Activated naive CD4-positive, alpha-beta T cell treated with anti-CD3 and anti-CD28 coated beads for 36 hours (primary cell): ENCODE measurements at regions of chr2 and their contacts with region 1.

Region 1: DNA sequence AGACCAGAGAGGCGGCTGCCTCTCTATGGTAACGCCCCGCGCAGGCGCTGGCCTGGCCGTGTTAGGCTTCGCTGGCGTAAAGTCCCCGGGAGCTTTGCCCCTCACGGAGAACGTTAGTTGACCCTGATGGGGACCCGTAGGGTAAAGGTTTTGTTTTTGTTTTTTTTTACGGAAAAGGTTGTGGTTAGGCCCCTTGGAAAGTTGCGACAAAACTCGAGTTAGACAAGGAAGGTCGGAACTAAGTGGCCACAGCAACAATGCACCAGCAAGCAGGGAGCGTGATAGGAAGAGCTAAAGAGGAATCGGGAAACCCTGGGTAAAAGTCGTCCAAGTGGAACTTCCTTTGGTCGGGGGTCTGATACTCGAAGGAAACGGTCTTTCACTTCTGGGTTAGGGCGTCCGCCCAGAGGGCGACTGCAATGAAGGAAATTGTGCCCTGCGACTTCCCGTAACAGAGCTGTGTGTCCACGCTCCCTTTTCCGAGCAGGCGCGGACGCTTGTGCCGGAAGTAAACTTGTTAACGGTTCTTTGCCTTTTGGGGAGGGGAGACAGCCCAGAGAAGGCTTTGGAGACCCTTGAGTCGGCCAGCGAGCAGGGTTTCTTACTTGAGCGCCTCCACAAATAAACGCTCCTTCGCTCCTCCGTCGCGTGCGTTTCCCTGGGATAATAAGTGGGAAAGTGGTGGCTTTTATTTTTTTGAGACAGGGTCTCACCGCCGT is 493 bp upstream of the CLASP1 start:
- DNase-seq: peak; percentile 97
- H3K4me3 Mint-ChIP-seq: peak overlapping the region; percentile 98
- H3K27ac Mint-ChIP-seq: peak overlapping the region; percentile 99
- H3K4me1 Mint-ChIP-seq: peaks cover 63% of the 10 kb centered on the region
- H3K27me3 Mint-ChIP-seq: no peaks in the 10 kb centered on the region

Region 2: GRCh38 chr2:121400201-121400600 is 249.6 kb before region 1 on chr2:
- CTCF ChIA-PET with region 1: no interaction called
- intact Hi-C with region 1: loop called (anchors 1 kb)
- DNase-seq: no peak
- H3K4me3 Mint-ChIP-seq: no peak overlapping the region
- H3K27ac Mint-ChIP-seq: no peak overlapping the region
- H3K4me1 Mint-ChIP-seq: no peaks in the 10 kb centered on the region
- H3K27me3 Mint-ChIP-seq: no peaks in the 10 kb centered on the region

Region 3: GRCh38 chr2:121634354-121635307 is 15.1 kb before region 1 on chr2:
- CTCF ChIA-PET with region 1: no interaction called
- intact Hi-C with region 1: loop called (anchors 1 kb)
- DNase-seq: peak; percentile 17
- H3K4me3 Mint-ChIP-seq: no peak overlapping the region
- H3K27ac Mint-ChIP-seq: no peak overlapping the region
- H3K4me1 Mint-ChIP-seq: peaks cover 33% of the 10 kb centered on the region
- H3K27me3 Mint-ChIP-seq: no peaks in the 10 kb centered on the region

Region 4: DNA sequence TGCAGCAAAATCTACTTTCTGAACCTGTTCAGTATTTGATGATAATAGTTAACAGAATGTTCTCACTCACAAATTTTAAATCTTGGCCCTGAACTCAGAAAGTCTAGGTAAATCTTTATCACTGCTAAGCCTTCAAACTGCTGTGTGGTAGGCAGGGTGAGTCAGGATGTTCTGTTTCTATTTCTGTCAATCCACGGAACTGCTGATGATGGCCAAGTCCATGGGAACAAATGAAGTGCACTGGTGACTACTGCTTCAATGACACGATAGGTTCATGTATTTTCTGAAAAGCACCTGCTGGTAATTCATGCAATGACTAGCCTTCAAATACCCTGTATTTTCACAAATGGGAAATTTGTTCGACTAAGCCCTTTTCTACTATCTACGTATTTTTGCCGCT is 72.7 kb after region 1 on chr2:
- CTCF ChIA-PET with region 1: interaction called, 4 read pairs
- intact Hi-C with region 1: loop called (anchors 1 kb)
- DNase-seq: peak; percentile 59
- H3K4me3 Mint-ChIP-seq: no peak overlapping the region
- H3K27ac Mint-ChIP-seq: peak overlapping the region; percentile 91
- H3K4me1 Mint-ChIP-seq: peaks cover 41% of the 10 kb centered on the region
- H3K27me3 Mint-ChIP-seq: no peaks in the 10 kb centered on the region

Region 5: GRCh38 chr2:121755236-121756111 is 105.7 kb after region 1 on chr2 and contains the start of gene TSN:
- CTCF ChIA-PET with region 1: no interaction called
- intact Hi-C with region 1: loop called (anchors 1 kb)
- DNase-seq: peak; percentile 98
- H3K4me3 Mint-ChIP-seq: peak within 1 kb of the TSS; percentile 91
- H3K27ac Mint-ChIP-seq: peak within 1 kb of the TSS; percentile 80
- H3K4me1 Mint-ChIP-seq: peaks cover 32% of the 10 kb centered on the region
- H3K27me3 Mint-ChIP-seq: no peaks in the 10 kb centered on the region
- total RNA-seq, gene TSN: 49.8 to 52.6 TPM